Activated CD4-positive, alpha-beta memory T cell treated with anti-CD3 and anti-CD28 coated beads, Interleukin-2, amount 10 ng/mL, durations not matched to agents 7 days and 5 days (primary cell): ENCODE measurements at regions of chr1 and their contacts with region 1.

Region 1: DNA sequence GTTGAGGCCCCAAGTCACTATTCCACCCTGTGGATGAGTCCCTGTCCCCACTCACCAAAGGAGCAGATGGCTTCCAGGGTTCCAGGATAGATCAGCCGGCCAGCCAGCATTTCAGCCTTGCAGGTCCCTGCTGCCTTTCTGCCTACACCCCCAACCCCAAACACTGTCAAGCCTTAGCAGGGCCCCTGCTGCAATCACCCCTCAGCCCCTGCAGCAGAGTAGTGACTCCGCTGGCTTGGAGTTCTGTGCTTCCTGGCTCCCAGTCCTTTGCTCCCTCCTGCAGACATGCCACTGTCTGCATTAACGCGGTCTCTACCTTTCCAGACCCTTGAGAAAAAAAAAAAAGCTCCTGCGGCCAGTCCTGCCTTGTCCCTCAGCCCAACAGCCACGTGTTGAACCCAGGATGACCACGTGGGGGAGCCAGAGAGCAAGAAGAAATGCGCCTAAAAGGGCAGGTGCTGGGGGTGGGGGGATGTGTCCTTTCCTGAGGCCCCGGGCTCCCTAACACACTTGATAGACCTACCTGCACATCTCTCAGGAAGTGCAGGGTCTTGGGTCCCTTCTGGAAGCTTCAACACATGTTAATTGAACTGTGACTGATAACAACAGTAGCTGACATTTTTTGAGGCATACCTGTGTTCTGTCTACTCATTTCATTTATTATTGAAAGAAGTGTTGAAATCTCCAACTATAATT is 37.4 kb downstream of the RASSF5 start:
- DNase-seq: peak; percentile 83
- H3K4me3 Mint-ChIP-seq: no peak overlapping the region
- H3K27ac Mint-ChIP-seq: no peak overlapping the region
- H3K4me1 Mint-ChIP-seq: peaks cover 17% of the 10 kb centered on the region
- H3K27me3 Mint-ChIP-seq: no peaks in the 10 kb centered on the region

Region 2: GRCh38 chr1:206459703-206460102 is 85.0 kb before region 1 on chr1:
- CTCF ChIA-PET with region 1: no interaction called
- POLR2A ChIA-PET with region 1: no interaction called
- DNase-seq: no peak
- H3K4me3 Mint-ChIP-seq: no peak overlapping the region
- H3K27ac Mint-ChIP-seq: no peak overlapping the region
- H3K4me1 Mint-ChIP-seq: peaks cover 44% of the 10 kb centered on the region
- H3K27me3 Mint-ChIP-seq: no peaks in the 10 kb centered on the region

Region 3: GRCh38 chr1:206479183-206480125 is 65.3 kb before region 1 on chr1:
- CTCF ChIA-PET with region 1: interaction called, 20 read pairs
- POLR2A ChIA-PET with region 1: no interaction called
- DNase-seq: peak; percentile 73
- H3K4me3 Mint-ChIP-seq: no peak overlapping the region
- H3K27ac Mint-ChIP-seq: peak overlapping the region; percentile 56
- H3K4me1 Mint-ChIP-seq: peaks cover 10% of the 10 kb centered on the region
- H3K27me3 Mint-ChIP-seq: no peaks in the 10 kb centered on the region

Region 4: GRCh38 chr1:206556750-206557635 is 12.3 kb after region 1 on chr1:
- CTCF ChIA-PET with region 1: interaction called, 119 read pairs
- POLR2A ChIA-PET with region 1: interaction called, 1,193 read pairs
- DNase-seq: peak; percentile 94
- H3K4me3 Mint-ChIP-seq: peak overlapping the region; percentile 92
- H3K27ac Mint-ChIP-seq: peak overlapping the region; percentile 94
- H3K4me1 Mint-ChIP-seq: peaks cover 68% of the 10 kb centered on the region
- H3K27me3 Mint-ChIP-seq: no peaks in the 10 kb centered on the region

Region 5: DNA sequence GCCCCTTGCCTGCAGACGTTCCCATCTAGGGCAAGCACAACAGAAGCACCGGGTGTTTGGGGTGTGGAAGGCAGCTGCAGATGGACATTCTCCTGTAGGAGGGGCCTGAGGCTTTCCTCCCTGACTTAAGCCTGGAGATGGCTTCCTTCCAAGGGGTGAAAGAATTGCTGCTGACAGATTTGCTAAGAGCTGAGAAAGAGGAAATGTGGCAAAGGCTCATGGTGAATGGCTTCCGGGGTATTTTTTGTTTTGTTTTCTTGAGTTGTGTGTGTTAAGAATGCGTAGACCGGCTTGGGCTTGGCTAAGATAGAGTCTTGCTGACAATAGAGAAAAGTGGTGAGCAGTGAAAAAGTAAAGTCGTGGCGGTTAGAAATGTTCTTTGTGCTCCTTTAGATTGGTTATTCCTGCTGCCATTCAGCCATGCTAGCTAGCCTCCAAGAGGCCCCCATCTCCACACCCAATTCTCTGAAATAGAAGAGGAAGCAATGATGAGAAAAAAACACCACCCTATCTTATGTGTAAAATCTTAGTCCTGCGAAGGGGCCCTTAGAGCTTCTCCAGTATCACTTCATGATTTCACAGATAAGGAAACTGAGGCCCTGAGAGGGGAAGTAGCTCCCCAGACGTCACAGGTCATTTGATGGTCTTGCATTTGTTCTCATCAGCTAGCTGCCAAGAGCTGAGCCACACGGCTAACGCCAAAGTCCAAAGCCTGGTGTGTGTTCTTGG is 30.6 kb after region 1 on chr1:
- CTCF ChIA-PET with region 1: interaction called, 524 read pairs
- POLR2A ChIA-PET with region 1: interaction called, 1,193 read pairs
- DNase-seq: peak; percentile 72
- H3K4me3 Mint-ChIP-seq: peak overlapping the region; percentile 56
- H3K27ac Mint-ChIP-seq: peak overlapping the region; percentile 90
- H3K4me1 Mint-ChIP-seq: peaks cover 99% of the 10 kb centered on the region
- H3K27me3 Mint-ChIP-seq: no peaks in the 10 kb centered on the region

Region 6: GRCh38 chr1:206590025-206590758 is 45.5 kb after region 1 on chr1:
- CTCF ChIA-PET with region 1: interaction called, 524 read pairs
- POLR2A ChIA-PET with region 1: interaction called, 1,193 read pairs
- DNase-seq: peak; percentile 80
- H3K4me3 Mint-ChIP-seq: peak overlapping the region; percentile 55
- H3K27ac Mint-ChIP-seq: peak overlapping the region; percentile 98
- H3K4me1 Mint-ChIP-seq: peaks cover 68% of the 10 kb centered on the region
- H3K27me3 Mint-ChIP-seq: no peaks in the 10 kb centered on the region

Region 7: GRCh38 chr1:206663832-206664652 is 119.3 kb after region 1 on chr1:
- CTCF ChIA-PET with region 1: interaction called, 30 read pairs
- POLR2A ChIA-PET with region 1: no interaction called
- DNase-seq: peak; percentile 69
- H3K4me3 Mint-ChIP-seq: no peak overlapping the region
- H3K27ac Mint-ChIP-seq: no peak overlapping the region
- H3K4me1 Mint-ChIP-seq: peaks cover 29% of the 10 kb centered on the region
- H3K27me3 Mint-ChIP-seq: peaks cover 27% of the 10 kb centered on the region

Region 8: GRCh38 chr1:206792939-206793607 is 248.4 kb after region 1 on chr1:
- CTCF ChIA-PET with region 1: no interaction called
- POLR2A ChIA-PET with region 1: no interaction called
- DNase-seq: no peak
- H3K4me3 Mint-ChIP-seq: no peak overlapping the region
- H3K27ac Mint-ChIP-seq: no peak overlapping the region
- H3K4me1 Mint-ChIP-seq: peaks cover 52% of the 10 kb centered on the region
- H3K27me3 Mint-ChIP-seq: peaks cover 37% of the 10 kb centered on the region